Posterior vena cava (tissue), 2 donors: ENCODE measurements at regions of chr1 and their contacts with region 1.

Region 1: DNA sequence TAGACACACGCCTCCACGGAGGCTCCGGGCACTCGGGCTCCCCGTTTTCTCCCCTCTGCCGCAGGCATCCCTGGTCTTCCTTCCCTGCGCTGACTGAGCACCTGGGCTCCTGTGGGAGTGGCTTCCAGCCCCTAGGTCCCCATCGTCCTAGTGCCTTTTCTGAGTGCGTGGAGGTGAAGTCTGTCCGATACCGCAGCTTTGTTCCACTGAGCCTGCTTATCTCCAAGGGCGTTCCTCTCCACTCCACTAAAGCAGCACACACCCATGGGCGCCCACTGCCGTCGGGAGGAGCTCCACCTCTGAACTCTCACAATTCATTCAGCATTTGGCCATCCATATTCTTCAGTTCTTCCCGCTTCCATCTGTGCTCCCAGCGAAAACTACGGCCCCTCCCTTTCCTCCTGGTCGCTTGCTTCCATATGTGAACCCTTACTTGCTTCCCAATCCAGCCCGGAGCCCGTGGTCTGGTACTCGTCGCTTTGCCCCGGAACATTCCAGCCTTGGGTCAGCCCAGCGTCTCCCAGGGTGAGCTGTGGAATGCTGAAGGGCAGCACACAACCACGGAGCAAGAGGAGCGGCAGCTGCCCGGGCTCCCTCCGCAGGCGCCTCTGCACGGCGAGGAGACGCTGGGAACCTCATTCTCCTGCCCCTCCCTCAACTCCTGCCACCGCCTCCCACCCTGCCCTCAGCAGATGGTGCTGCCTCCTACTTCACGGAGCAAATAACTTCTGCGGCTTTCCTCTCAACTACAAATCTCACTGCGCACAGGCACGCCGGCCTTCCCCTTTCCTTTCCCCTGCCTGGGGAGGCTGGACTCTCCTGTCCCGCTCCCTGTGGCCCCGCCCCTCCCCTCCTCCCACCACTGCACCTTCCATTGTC is 27.5 kb downstream of the ATP8B2 start:
- DNase-seq: peak; percentile 86

Region 2: DNA sequence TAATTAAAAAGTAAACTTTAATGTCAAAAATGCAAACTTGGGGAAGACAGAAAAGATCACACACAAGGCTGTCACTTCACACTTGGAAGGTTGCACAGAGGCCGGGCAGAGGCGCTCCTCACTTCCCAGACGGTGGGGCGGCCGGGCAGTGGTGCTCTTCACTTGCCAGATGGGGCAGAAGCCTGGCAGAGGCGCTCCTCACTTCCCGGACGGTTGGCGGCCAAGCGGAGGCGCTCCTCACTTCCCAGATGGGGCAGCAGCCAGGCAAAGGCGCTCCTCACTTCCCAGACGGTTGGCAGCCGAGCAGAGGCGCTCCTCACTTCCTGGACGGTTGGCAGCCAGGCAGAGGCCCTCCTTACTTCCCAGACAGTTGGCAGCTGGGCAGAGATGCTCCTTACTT is 26.5 kb after region 1 on chr1:
- intact Hi-C with region 1: no loop called
- DNase-seq: no peak

Region 3: GRCh38 chr1:154442006-154442740 is 89.4 kb after region 1 on chr1:
- intact Hi-C with region 1: loop called in 1 of 2 experiments (anchors 10 kb)
- DNase-seq: no peak

Region 4: GRCh38 chr1:154463512-154463990 is 110.7 kb after region 1 on chr1:
- intact Hi-C with region 1: loop called in 1 of 2 experiments (anchors 10 kb)
- DNase-seq: no peak